ENCODE measurements at regions of chr9 and their contacts with region 1.

Region 1: DNA sequence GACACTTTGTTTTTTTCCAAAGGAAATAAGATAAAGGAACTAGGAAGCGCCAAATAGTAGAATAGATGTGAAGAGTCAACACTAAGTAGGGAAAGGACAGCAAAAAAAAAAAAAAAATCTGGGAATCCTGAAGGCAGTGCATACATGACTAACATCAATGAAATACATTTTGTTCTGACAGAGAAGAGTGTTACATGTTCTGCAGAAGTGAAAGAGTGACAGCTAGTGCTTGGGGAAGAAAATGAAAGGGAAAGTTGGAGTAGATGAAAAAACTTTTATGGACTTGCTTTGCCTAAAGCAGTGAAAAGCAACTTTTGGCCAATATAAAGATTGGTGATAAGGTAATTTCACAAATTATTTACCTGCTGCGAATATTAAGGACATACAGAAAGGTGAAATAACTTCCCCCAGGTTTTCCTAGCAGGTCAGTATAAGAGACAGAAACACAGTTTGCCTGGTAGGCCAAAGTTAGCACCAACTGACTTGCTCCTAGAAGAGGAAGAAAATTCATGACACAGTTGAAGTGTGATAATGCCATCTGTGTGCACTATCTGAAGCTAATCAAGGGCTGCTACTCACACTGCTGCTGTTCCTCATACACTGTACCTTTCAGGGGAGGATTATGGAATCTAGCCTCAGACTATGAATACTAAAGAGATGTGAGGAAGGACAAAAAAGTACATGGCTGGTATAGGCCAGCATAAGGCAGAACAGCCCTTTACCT is 38.6 kb downstream of the RANBP6 start:
- DNase-seq: no peak
- H3K4me3 ChIP-seq: no peak overlapping the region
- H3K27ac ChIP-seq: peak overlapping the region in 1 of 2 donors; percentile 44
- H3K4me1 ChIP-seq: peaks cover 0 to 39% (median 8%) of the 10 kb centered on the region in 4 donors
- H3K27me3 ChIP-seq: no peaks in the 10 kb centered on the region
- CTCF ChIP-seq: no peak

Region 2: GRCh38 chr9:5939530-5939929 is 37.3 kb before region 1 on chr9:
- intact Hi-C with region 1: loop called (anchors 2 kb)
- DNase-seq: no peak
- H3K4me3 ChIP-seq: no peak overlapping the region
- H3K27ac ChIP-seq: no peak overlapping the region
- H3K4me1 ChIP-seq: no peaks in the 10 kb centered on the region
- H3K27me3 ChIP-seq: no peaks in the 10 kb centered on the region
- CTCF ChIP-seq: no peak

Region 3: GRCh38 chr9:6015278-6016157 is 38.7 kb after region 1 on chr9 and contains the start of gene RANBP6:
- intact Hi-C with region 1: no loop called
- DNase-seq: peak; percentile 81 to 92
- H3K4me3 ChIP-seq: peak within 1 kb of the TSS; percentile 58 to 71
- H3K27ac ChIP-seq: peak within 1 kb of the TSS; percentile 68 to 73
- H3K4me1 ChIP-seq: peaks cover 0 to 39% (median 18%) of the 10 kb centered on the region in 4 donors
- H3K27me3 ChIP-seq: no peaks in the 10 kb centered on the region
- CTCF ChIP-seq: no peak

Region 4: DNA sequence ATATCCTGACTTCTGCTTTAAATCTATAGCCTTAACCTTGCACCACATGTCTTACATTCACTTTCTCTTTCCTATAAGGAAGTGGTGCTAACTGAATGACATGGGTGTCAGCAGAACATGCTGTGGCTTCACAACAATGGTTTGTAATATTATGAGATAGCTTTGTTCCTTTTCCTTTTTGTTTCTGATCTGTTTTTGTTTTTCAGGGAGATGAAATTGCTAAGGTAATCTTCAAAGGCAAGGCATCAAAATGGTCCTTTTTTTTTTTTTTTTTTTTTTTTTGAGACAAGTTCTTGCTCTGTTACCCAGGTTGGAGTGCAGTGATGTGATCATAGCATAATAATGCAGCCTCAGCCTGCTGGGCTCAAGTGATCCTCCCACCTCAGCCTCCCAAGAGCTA is 92.1 kb after region 1 on chr9:
- intact Hi-C with region 1: no loop called
- DNase-seq: no peak
- H3K4me3 ChIP-seq: no peak overlapping the region
- H3K27ac ChIP-seq: no peak overlapping the region
- H3K4me1 ChIP-seq: no peaks in the 10 kb centered on the region
- H3K27me3 ChIP-seq: peaks cover 0 to 4% of the 10 kb centered on the region in 2 donors
- CTCF ChIP-seq: no peak